Left cardiac atrium (tissue), 4 donors: ENCODE measurements at regions of chr2 and their contacts with region 1.

Region 1: GRCh38 chr2:39436592-39437510 is at the start of gene MAP4K3:
- DNase-seq: peak; percentile 94
- ATAC-seq: peak; percentile 95
- total RNA-seq, gene MAP4K3: 28.0 to 31.2 TPM

Region 2: DNA sequence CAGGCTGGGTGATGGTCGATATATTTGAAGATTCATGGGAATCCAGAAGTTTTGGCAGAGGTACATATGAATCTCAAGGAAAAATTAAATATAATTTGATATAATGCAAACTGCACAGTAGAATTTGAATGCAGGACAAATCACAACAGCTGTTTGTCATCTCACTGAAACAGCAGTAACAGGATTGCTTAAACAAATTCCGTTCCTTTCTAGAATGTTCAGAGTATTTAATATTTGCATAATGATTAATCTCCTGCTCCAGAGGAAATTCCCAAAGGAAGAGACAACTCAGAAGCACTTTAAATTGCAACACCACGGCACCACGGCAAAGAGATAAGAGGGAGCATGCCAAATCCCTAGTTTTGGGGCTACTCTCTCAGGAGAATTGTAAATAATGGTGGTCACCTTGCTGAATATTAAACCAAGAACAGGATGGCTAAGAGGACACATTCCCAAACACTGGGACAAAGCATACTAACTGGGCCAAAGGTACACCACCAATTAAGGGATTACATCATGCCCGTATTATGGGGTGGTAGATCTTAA is 68.0 kb after region 1 on chr2:
- intact Hi-C with region 1: loop called in 1 of 2 experiments (anchors 5 kb)
- DNase-seq: no peak
- ATAC-seq: peak; percentile 41 to 58